PC-9 (cell line): ENCODE measurements at regions of chr1 and their contacts with region 1.

Region 1: DNA sequence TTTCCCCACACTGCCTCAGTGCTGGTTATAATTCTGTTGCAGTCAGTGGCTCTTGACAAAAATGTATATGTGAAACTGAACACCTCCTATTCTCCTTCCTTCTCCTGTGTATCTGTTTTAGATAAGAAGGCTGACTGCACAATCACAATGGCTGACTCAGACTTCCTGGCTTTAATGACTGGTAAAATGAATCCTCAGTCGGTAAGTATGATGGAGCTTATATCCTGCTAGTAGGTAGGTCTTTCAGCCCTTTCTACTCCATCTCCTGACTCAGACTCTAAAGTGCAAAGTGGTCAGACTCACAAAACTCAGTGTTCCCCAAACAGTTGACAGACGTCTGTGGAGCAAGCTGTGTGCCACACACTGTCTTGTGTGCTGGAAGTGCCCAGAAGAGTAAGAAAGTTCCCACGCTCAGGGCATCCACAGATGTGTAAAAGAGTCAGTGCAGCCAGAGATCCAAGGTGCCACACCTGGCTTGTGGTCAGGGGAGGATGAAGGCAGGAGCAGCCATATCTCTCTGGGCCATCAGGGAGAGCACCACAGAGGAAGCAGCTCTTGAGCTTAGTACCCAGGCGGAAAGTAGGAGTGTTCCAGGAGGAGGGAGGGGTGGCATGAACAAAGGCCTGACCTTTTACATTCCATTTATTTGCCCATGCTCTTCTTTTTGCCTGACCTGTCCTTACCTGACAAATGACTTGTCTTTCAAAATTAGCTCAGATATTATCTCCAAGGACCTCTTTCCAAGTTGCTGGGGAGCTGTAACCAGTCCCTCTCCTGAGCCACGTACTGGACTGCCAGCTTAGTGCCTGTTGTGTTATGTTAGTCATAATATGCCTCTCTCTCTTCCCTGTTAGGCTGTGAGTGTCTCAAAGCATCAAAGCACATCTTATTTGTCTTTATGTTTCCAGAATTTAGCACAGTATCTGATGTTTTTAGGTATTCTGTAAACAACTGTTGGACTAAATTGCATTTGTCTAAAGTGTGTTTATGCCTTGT is 14.0 kb upstream of the PODN start:
- DNase-seq: peak; percentile 76 to 98
- H3K4me3 ChIP-seq: no peak overlapping the region
- H3K27ac ChIP-seq: peak overlapping the region; percentile 74
- H3K4me1 ChIP-seq: peaks cover 47% of the 10 kb centered on the region
- H3K27me3 ChIP-seq: no peaks in the 10 kb centered on the region
- CTCF ChIP-seq: no peak

Region 2: GRCh38 chr1:52927212-52928014 is 120.6 kb before region 1 on chr1 and contains the start of gene SCP2:
- CTCF ChIA-PET with region 1: no interaction called
- POLR2A ChIA-PET with region 1: no interaction called
- intact Hi-C with region 1: loop called (anchors 10 kb)
- DNase-seq: peak; percentile 45 to 71
- H3K4me3 ChIP-seq: peak within 1 kb of the TSS; percentile 97
- H3K27ac ChIP-seq: no peak within 1 kb of the TSS
- H3K4me1 ChIP-seq: 0 out of 2 replicates have a peak, but pooled peaks cover 9% of the 10 kb centered on the region
- H3K27me3 ChIP-seq: no peaks in the 10 kb centered on the region
- CTCF ChIP-seq: no peak
- total RNA-seq, gene SCP2: 87.8 and 95.8 TPM in 2 replicates

Region 3: DNA sequence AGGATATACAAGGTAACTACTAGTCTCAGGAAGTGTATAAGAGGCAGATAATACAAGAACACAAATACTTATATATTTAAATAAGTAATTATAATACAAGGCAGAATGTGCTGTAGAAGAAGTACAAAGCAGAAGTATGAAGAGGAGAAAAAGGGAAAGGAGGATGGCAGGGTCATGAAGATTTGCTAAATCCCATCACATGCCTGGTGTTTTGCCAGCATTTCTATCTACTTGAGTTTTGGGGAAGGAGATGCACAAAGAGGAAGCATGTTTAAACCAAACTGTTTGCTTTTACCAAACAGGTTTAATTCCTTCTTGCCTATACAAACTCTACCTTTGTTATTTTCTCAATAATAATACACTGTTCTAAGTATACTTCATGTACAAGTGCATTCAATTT is 46.9 kb before region 1 on chr1:
- CTCF ChIA-PET with region 1: no interaction called
- POLR2A ChIA-PET with region 1: no interaction called
- intact Hi-C with region 1: no loop called
- DNase-seq: no peak
- H3K4me3 ChIP-seq: no peak overlapping the region
- H3K27ac ChIP-seq: no peak overlapping the region
- H3K4me1 ChIP-seq: no peaks in the 10 kb centered on the region
- H3K27me3 ChIP-seq: no peaks in the 10 kb centered on the region
- CTCF ChIP-seq: no peak

Region 4: DNA sequence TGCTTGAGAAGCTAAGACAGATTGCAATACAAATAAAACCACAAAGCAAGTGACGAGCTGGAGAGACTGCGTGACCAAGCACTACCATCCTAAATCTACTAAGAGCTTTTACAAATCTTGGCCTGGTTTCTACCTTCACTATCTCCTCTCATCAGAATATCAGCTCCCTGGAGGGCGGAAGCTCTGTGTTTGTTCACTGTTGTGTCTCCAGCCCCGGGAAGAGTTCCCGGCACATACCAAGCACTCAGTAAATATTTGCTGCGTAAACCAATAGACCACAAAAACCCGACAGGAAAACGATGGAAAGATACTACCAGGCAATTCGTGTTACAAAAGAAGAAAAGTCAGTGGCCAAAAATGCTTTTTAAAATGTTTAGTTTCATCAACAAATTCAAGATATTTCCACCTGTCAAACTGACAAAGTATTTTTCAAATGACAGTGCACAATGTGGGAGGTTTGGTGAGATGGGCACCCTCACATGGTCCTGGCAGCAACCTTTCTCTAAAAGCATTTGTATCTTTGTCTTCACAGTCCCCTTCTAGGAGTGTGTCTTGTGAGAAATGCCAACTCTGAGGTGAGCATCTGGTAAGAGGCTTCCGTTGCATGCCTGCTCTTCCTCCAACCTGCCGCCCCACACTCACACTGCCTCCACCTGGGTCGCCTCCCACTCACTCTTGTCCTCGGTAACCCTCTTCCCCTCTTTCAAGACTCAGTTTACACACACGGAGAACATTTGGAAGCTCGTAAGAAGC is 59.7 kb after region 1 on chr1:
- CTCF ChIA-PET with region 1: no interaction called
- POLR2A ChIA-PET with region 1: no interaction called
- intact Hi-C with region 1: loop called (anchors 1 kb)
- DNase-seq: peak; percentile 54 to 91
- H3K4me3 ChIP-seq: no peak overlapping the region
- H3K27ac ChIP-seq: no peak overlapping the region
- H3K4me1 ChIP-seq: peaks cover 45% of the 10 kb centered on the region
- H3K27me3 ChIP-seq: no peaks in the 10 kb centered on the region
- CTCF ChIP-seq: no peak

Region 5: DNA sequence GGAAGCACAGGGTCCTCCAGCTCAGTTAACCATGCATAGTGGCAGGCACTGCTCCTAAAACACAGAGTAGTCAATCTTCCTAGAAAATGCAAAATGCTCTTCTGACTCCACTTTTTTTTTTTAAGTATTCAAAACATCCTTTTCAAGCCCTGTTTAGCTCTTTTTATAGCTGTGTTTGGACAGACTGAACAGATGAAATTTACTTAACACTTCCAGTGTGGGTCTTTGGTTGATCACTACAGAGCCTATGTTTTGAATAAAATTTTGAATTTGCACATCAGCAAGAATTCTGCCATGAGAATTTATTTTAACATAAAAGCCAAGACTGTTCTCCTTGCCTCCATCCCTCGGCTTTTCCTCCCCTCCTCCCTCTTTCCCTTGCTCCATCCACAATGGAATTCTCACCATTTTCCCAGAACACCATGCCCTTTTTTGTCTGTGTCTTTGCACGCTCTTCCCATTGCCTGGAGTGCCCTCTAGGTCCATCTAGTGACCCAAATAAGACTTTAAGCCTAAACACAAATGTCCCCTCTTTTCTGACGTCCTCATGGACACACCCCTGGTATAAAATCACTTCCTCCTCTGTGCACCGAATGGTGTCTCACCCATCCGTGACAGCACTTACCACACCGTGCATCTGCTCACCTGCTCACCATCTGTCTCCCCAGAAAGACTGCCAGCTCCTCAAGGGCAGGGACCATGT is 124.5 kb after region 1 on chr1:
- CTCF ChIA-PET with region 1: interaction called, 3 read pairs
- POLR2A ChIA-PET with region 1: interaction called, 18 read pairs
- intact Hi-C with region 1: no loop called
- DNase-seq: no peak
- H3K4me3 ChIP-seq: no peak overlapping the region
- H3K27ac ChIP-seq: no peak overlapping the region
- H3K4me1 ChIP-seq: 0 out of 2 replicates have a peak, but pooled peaks cover 5% of the 10 kb centered on the region
- H3K27me3 ChIP-seq: no peaks in the 10 kb centered on the region
- CTCF ChIP-seq: peak; percentile 20; the same call in 1 of the 2 replicates